Activated CD8-positive, alpha-beta T cell treated with anti-CD3 and anti-CD28 coated beads, Interleukin-2, amount 10 ng/mL, durations not matched to agents 7 days and 5 days (primary cell): ENCODE measurements at regions of chr16 and their contacts with region 1.

Region 1: DNA sequence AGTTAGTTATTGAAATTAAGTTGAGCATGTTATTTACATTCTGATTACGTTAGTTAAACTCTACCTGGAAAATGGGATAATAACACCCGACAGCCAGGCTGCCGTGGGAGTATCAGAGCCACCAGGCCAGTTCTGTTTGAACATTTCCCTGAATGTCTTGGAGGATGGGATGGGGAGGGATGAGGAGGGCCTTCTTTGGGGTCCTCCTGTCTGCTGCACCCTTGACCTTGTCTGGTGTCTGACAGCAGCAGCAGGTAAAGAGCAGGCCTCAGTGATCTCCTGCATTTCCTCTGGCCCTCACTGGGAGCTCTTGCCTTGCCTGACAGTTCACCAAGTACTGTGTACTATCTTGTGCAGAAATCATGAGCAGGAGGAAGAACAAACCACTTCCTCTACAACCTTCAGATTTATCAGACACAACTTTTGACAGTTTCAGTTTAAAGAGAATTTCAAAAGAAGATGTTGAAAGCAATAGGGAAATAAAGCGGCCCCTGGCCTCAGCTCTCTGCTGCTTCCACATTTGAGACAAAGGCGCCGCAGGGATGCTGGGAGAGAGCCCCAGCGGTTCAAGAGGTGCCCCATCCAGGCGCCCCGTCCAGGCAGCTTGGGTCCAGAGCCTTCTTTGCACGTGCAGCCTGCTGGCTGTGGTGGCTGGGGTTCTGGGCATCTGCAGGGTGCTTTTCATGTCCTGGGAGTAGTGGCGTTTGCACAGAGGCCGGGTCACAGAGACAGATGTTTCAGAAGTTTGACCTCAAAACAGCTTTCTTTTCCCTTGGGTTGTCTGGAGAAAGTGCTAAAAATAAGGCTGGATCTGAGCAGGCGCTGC is 25.3 kb downstream of the CMIP start:
- DNase-seq: peak; percentile 68
- ATAC-seq: peak; percentile 96
- H3K4me3 Mint-ChIP-seq: peak overlapping the region; percentile 75
- H3K27ac Mint-ChIP-seq: peak overlapping the region; percentile 88
- H3K4me1 Mint-ChIP-seq: peaks cover 88% of the 10 kb centered on the region
- H3K27me3 Mint-ChIP-seq: no peaks in the 10 kb centered on the region

Region 2: GRCh38 chr16:81410643-81411293 is 59.2 kb before region 1 on chr16:
- CTCF ChIA-PET with region 1: no interaction called
- POLR2A ChIA-PET with region 1: no interaction called
- DNase-seq: no peak
- ATAC-seq: no peak
- H3K4me3 Mint-ChIP-seq: no peak overlapping the region
- H3K27ac Mint-ChIP-seq: no peak overlapping the region
- H3K4me1 Mint-ChIP-seq: no peaks in the 10 kb centered on the region
- H3K27me3 Mint-ChIP-seq: peaks cover 12% of the 10 kb centered on the region

Region 3: DNA sequence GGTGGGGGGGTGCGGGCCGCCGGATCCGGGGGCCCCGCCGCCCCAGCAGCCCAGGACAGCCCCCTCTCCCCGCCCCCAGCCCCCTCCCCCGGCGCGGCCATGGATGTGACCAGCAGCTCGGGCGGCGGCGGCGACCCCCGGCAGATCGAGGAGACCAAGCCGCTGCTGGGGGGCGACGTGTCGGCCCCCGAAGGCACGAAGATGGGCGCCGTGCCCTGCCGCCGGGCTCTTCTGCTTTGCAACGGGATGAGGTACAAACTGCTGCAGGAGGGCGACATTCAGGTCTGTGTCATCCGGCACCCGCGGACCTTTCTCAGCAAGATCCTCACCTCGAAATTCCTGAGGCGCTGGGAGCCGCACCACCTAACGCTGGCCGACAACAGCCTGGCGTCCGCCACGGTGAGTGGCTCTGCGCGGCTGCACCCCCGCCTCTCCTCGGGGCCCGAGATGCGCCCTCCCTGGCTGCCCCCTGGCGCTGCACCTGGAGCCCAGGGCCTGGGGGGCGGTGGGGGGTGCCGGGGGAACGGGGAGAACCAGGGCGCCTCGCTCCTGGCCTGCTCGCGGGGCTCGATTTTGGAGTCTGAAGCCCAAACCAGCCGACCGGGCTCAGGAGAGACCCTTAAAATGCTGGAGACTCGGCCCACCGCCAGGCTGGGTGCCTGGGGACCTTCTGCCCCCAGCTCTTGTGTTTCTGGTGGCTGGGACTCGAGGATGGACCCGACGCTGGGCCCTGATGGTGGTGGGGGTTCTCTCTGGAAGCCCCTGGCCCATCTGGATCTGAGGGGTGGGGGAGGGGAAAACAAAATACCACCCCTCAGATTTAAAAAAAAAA is 24.6 kb before region 1 on chr16:
- CTCF ChIA-PET with region 1: interaction called, 15 read pairs
- POLR2A ChIA-PET with region 1: interaction called, 14 read pairs
- DNase-seq: peak; percentile 67
- ATAC-seq: peak; percentile 52
- H3K4me3 Mint-ChIP-seq: peak overlapping the region; percentile 93
- H3K27ac Mint-ChIP-seq: peak overlapping the region; percentile 90
- H3K4me1 Mint-ChIP-seq: peaks cover 54% of the 10 kb centered on the region
- H3K27me3 Mint-ChIP-seq: peaks cover 21% of the 10 kb centered on the region

Region 4: GRCh38 chr16:81451753-81452680 is 17.9 kb before region 1 on chr16:
- CTCF ChIA-PET with region 1: interaction called, 15 read pairs
- POLR2A ChIA-PET with region 1: interaction called, 14 read pairs
- DNase-seq: peak; percentile 72
- ATAC-seq: peak; percentile 85
- H3K4me3 Mint-ChIP-seq: peak overlapping the region; percentile 61
- H3K27ac Mint-ChIP-seq: peak overlapping the region; percentile 89
- H3K4me1 Mint-ChIP-seq: peaks cover 75% of the 10 kb centered on the region
- H3K27me3 Mint-ChIP-seq: no peaks in the 10 kb centered on the region

Region 5: GRCh38 chr16:81521151-81521626 is 51.3 kb after region 1 on chr16:
- CTCF ChIA-PET with region 1: interaction called, 3 read pairs
- POLR2A ChIA-PET with region 1: interaction called, 11 read pairs
- DNase-seq: peak; percentile 96
- ATAC-seq: peak; percentile 73
- H3K4me3 Mint-ChIP-seq: peak overlapping the region; percentile 64
- H3K27ac Mint-ChIP-seq: peak overlapping the region; percentile 92
- H3K4me1 Mint-ChIP-seq: peaks cover 77% of the 10 kb centered on the region
- H3K27me3 Mint-ChIP-seq: no peaks in the 10 kb centered on the region

Region 6: GRCh38 chr16:81610144-81610842 is 140.4 kb after region 1 on chr16:
- CTCF ChIA-PET with region 1: no interaction called
- POLR2A ChIA-PET with region 1: no interaction called
- DNase-seq: no peak
- ATAC-seq: no peak
- H3K4me3 Mint-ChIP-seq: no peak overlapping the region
- H3K27ac Mint-ChIP-seq: no peak overlapping the region
- H3K4me1 Mint-ChIP-seq: no peaks in the 10 kb centered on the region
- H3K27me3 Mint-ChIP-seq: no peaks in the 10 kb centered on the region